Naive thymus-derived CD4-positive, alpha-beta T cell (primary cell): ENCODE measurements at regions of chr1 and their contacts with region 1.

Region 1: DNA sequence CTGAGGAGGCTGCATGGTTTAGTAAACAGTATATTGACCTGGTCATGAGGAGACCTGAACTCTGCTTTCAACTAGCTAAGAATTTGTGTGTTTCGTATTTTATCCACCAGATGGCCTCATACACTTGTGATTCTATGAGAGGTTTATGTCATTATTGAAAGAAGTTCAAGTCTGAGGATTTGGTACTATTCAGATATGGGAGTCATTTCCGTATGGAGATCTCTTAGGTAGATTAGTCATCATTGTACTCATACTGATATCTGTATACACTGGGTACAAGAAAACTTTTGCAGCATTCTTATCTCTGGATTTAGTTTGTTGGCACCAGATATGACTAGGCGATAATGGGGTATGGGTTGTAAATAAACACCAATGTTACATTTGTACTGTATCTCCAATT is 26.6 kb downstream of the ATF6 start:
- DNase-seq: peak in 7 of 9 donors; percentile 18 to 56 (median 41)
- ATAC-seq: peak; percentile 76
- H3K4me3 ChIP-seq: no peak overlapping the region
- H3K4me3 Mint-ChIP-seq: no peak overlapping the region
- H3K27ac ChIP-seq: no peak overlapping the region
- H3K27ac Mint-ChIP-seq: no peak overlapping the region
- H3K4me1 ChIP-seq: no peaks in the 10 kb centered on the region
- H3K4me1 Mint-ChIP-seq: peaks cover 0 to 26% (median 5%) of the 10 kb centered on the region in 7 donors
- H3K27me3 ChIP-seq: no peaks in the 10 kb centered on the region
- H3K27me3 Mint-ChIP-seq: no peaks in the 10 kb centered on the region

Region 2: DNA sequence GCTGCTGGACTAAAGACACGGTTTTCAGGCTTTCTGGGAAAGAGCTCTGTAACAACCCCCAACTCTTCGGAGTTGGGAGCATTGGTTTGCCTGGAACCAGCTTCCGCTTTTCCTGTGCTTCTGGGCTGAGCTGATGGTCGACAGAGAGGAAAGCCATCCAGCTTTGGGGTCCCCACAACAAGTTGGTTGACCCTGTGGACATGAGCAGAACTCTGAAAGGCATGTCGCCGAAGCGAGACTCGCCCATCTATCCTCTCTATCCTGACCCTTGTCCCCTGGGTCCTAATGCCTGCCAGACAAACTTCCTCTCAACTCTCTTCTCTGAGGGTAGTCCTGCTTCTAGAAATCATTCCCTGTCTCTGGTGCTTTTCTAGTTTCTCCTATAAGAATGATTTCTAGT is 319.4 kb before region 1 on chr1:
- CTCF ChIA-PET with region 1: no interaction called
- POLR2A ChIA-PET with region 1: no interaction called
- intact Hi-C with region 1: no loop called
- DNase-seq: no peak
- ATAC-seq: no peak
- H3K4me3 ChIP-seq: no peak overlapping the region
- H3K4me3 Mint-ChIP-seq: peak overlapping the region in 8 of 10 donors; percentile 15 to 77 (median 41)
- H3K27ac ChIP-seq: no peak overlapping the region
- H3K27ac Mint-ChIP-seq: no peak overlapping the region
- H3K4me1 ChIP-seq: peaks cover 0 to 6% of the 10 kb centered on the region in 2 donors
- H3K4me1 Mint-ChIP-seq: peaks cover 7 to 16% (median 11%) of the 10 kb centered on the region in 7 donors
- H3K27me3 ChIP-seq: peaks cover 0 to 3% of the 10 kb centered on the region in 2 donors
- H3K27me3 Mint-ChIP-seq: peaks cover 31 to 41% (median 33%) of the 10 kb centered on the region in 5 donors

Region 3: GRCh38 chr1:161772397-161772796 is 20.3 kb before region 1 on chr1:
- CTCF ChIA-PET with region 1: interaction called, 5 read pairs
- POLR2A ChIA-PET with region 1: no interaction called
- intact Hi-C with region 1: loop called (anchors 1 to 2 kb)
- DNase-seq: peak in 1 of 9 donors; percentile 12
- ATAC-seq: peak; percentile 55
- H3K4me3 ChIP-seq: no peak overlapping the region
- H3K4me3 Mint-ChIP-seq: no peak overlapping the region
- H3K27ac ChIP-seq: peak overlapping the region; percentile 53
- H3K27ac Mint-ChIP-seq: no peak overlapping the region
- H3K4me1 ChIP-seq: peaks cover 38 to 67% of the 10 kb centered on the region in 2 donors
- H3K4me1 Mint-ChIP-seq: peaks cover 8 to 30% (median 15%) of the 10 kb centered on the region in 7 donors
- H3K27me3 ChIP-seq: no peaks in the 10 kb centered on the region
- H3K27me3 Mint-ChIP-seq: no peaks in the 10 kb centered on the region

Region 4: DNA sequence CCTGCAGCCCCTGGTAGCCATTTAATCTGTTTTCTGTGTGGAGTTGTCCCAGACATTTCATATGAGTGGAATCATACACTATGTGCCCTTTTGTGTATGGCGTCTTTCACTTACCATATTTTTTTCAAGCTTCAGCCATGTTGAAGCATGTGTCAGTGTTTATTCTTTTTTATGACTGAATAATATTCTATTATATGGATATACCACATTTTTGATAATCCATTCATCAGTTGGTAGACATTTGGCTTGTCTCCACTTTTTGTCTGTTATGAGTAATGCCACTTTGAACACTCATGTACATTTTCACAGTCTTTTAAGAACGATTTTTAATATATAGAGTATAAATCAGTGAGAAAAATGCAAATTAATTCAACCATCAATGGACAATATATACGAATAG is 18.0 kb after region 1 on chr1:
- CTCF ChIA-PET with region 1: no interaction called
- POLR2A ChIA-PET with region 1: no interaction called
- intact Hi-C with region 1: no loop called
- DNase-seq: no peak
- ATAC-seq: no peak
- H3K4me3 ChIP-seq: no peak overlapping the region
- H3K4me3 Mint-ChIP-seq: no peak overlapping the region
- H3K27ac ChIP-seq: no peak overlapping the region
- H3K27ac Mint-ChIP-seq: no peak overlapping the region
- H3K4me1 ChIP-seq: no peaks in the 10 kb centered on the region
- H3K4me1 Mint-ChIP-seq: peaks cover 3 to 24% (median 14%) of the 10 kb centered on the region in 7 donors
- H3K27me3 ChIP-seq: no peaks in the 10 kb centered on the region
- H3K27me3 Mint-ChIP-seq: no peaks in the 10 kb centered on the region

Region 5: DNA sequence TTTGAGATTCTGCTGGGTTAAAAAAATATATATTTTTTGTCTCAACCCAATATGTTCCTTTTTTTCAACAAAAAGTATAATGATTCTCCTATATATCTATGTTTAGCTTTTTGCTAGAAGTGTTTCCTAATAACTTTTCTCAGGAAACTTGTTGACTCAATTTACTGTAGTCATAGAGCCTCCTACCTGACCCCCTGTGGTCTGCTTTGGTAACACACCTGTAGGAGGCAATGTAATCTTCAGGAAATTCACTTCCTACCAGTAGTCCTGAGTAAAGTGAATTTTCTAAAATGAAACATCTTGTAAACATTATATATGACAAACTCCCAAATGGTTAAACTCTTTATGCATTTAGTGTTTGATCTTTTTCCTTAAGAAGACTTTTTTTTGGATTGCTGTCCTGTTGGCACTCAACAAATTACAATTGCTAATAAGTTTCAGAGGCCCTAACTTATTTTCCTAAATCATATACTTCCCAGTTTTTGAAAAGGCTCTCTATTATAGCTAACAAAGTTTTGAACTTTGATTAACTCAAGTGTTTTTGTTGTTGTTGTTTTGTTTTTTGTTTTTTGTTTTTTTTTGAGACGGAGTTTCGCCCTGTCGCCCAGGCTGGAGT is 112.6 kb after region 1 on chr1:
- CTCF ChIA-PET with region 1: no interaction called
- POLR2A ChIA-PET with region 1: no interaction called
- intact Hi-C with region 1: loop called in 1 of 2 experiments (anchors 1 kb)
- DNase-seq: peak in 3 of 9 donors; percentile 11 to 37 (median 17)
- ATAC-seq: peak; percentile 61
- H3K4me3 ChIP-seq: no peak overlapping the region
- H3K4me3 Mint-ChIP-seq: no peak overlapping the region
- H3K27ac ChIP-seq: no peak overlapping the region
- H3K27ac Mint-ChIP-seq: peak overlapping the region in 1 of 9 donors; percentile 24
- H3K4me1 ChIP-seq: no peaks in the 10 kb centered on the region
- H3K4me1 Mint-ChIP-seq: peaks cover 0 to 36% (median 20%) of the 10 kb centered on the region in 7 donors
- H3K27me3 ChIP-seq: no peaks in the 10 kb centered on the region
- H3K27me3 Mint-ChIP-seq: no peaks in the 10 kb centered on the region

Region 6: DNA sequence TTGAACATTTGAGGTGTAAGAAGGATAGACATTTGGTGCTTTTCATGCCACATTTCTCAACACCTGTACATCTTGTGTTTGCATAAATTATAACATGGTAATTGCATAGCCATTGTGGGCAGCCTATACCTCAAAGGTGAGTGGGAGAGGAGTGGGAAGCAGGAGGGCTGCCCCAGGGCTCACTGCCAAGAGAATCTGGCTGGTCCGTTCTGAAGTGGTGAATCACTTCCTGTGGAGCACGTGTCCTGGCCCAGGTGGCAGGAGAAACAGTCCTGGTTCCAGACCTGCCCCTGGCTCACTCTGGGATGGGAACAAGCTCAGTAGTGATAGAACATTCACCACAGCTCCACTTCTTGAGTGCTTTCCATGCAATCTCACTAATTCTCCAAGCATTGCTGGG is 242.5 kb after region 1 on chr1:
- CTCF ChIA-PET with region 1: interaction called, 136 read pairs
- POLR2A ChIA-PET with region 1: no interaction called
- intact Hi-C with region 1: loop called (anchors 1 kb)
- DNase-seq: no peak
- ATAC-seq: no peak
- H3K4me3 ChIP-seq: no peak overlapping the region
- H3K4me3 Mint-ChIP-seq: no peak overlapping the region
- H3K27ac ChIP-seq: no peak overlapping the region
- H3K27ac Mint-ChIP-seq: no peak overlapping the region
- H3K4me1 ChIP-seq: no peaks in the 10 kb centered on the region
- H3K4me1 Mint-ChIP-seq: peaks cover 0 to 10% (median 0%) of the 10 kb centered on the region in 7 donors
- H3K27me3 ChIP-seq: no peaks in the 10 kb centered on the region
- H3K27me3 Mint-ChIP-seq: peaks cover under 1 to 25% (median 13%) of the 10 kb centered on the region in 5 donors

Region 7: DNA sequence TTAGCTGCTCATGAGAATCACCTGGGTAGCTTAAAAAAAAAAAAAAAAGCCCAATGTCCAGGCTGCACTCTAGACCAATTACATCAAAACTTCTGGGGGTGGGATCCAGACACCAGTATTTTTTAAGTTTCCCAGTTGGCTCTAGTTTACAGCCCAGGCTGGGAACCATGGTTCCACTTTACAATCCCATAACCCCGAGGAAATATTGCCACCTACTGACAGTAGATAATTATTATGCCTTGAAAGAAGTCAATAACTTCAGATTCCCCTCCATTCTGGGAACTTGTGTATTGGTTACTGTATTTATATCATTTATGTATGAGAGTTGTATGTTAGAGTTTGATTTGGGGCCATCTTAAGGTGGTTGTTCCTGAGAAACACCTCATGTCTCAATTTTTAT is 483.8 kb after region 1 on chr1:
- CTCF ChIA-PET with region 1: no interaction called
- POLR2A ChIA-PET with region 1: no interaction called
- intact Hi-C with region 1: loop called in 1 of 2 experiments (anchors 10 kb)
- DNase-seq: no peak
- ATAC-seq: no peak
- H3K4me3 ChIP-seq: no peak overlapping the region
- H3K4me3 Mint-ChIP-seq: no peak overlapping the region
- H3K27ac ChIP-seq: no peak overlapping the region
- H3K27ac Mint-ChIP-seq: no peak overlapping the region
- H3K4me1 ChIP-seq: no peaks in the 10 kb centered on the region
- H3K4me1 Mint-ChIP-seq: no peaks in the 10 kb centered on the region
- H3K27me3 ChIP-seq: peaks cover 0 to 5% of the 10 kb centered on the region in 2 donors
- H3K27me3 Mint-ChIP-seq: peaks cover 12 to 46% (median 21%) of the 10 kb centered on the region in 5 donors